HepG2 (cell line): ENCODE measurements at regions of chr5 and their contacts with region 1.

Region 1: GRCh38 chr5:180470966-180471582 is 23.1 kb upstream of the CNOT6 start:
- DNase-seq: peak; percentile 25
- ATAC-seq: peak; percentile 77
- H3K4me3 ChIP-seq: no peak overlapping the region
- H3K27ac ChIP-seq: no peak overlapping the region
- H3K4me1 ChIP-seq: peaks cover 13% of the 10 kb centered on the region
- H3K27me3 ChIP-seq: peaks cover 3 to 31% of the 10 kb centered on the region in 2 experiments; a peak in 3 of 5 replicates
- CTCF ChIP-seq: peak; percentile 85
- EP300 ChIP-seq: no peak
- POLR2A ChIP-seq: no peak
- RAD21 ChIP-seq: peak; percentile 62

Region 2: DNA sequence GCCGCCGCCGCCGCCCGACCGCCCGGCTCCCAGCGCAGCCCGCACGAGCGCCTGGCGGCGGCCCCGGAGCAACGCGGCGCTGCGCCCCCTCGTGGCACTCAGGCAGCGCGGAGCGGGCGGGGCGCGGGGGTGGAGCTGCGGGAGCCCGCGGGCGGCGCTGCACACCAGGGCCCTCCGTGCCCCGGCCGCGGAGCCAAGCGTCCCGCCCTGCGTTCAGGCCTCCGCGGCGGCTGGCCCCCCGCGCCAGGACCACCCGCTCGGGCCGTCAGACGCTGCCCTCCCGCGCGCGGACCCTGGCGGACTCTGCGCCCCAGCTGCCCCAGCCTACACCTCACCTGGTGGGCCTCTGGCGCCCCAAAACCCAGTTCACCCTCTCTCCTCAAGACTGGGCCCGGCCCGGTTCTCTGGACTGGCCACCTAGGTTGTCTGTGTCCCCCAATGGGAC is 261.9 kb before region 1 on chr5 and contains the start of gene RASGEF1C:
- CTCF ChIA-PET with region 1: no interaction called
- POLR2A ChIA-PET with region 1: no interaction called
- in situ Hi-C with region 1: loop called (anchors 25 kb)
- intact Hi-C with region 1: no loop called
- DNase-seq: peak; percentile 16
- ATAC-seq: peak; percentile 86
- H3K4me3 ChIP-seq: peak within 1 kb of the TSS; percentile 21 to 61 (median 50); a peak in 4 of 6 replicates
- H3K27ac ChIP-seq: no peak within 1 kb of the TSS
- H3K4me1 ChIP-seq: peaks cover 11% of the 10 kb centered on the region
- H3K27me3 ChIP-seq: peaks cover 0 to 22% of the 10 kb centered on the region in 2 experiments; a peak in 3 of 5 replicates
- CTCF ChIP-seq: peak; percentile 48; the same call in 1 of the 2 replicates
- EP300 ChIP-seq: no peak
- POLR2A ChIP-seq: no peak
- RAD21 ChIP-seq: peak; percentile 79
- total RNA-seq, gene RASGEF1C: not detected in 2 replicates

Region 3: DNA sequence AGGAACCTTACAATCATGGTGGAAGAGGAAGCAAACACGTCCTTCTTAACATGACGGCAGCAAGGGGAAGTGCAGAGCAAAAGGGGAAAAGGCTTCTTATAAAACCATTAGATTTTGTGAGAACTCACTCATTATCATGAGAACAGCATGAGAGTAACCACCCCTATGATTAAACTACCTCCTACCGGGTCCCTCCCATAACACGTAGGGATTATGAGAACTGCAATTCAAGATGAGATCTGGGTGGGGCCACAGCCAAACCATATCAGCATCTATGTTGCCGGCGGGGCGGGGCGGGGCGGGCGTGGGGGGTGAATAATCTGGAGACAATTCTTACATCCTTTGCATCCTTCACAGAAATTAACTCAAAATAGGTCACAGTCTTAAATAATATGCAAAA is 59.1 kb before region 1 on chr5:
- CTCF ChIA-PET with region 1: interaction called, 6 read pairs
- POLR2A ChIA-PET with region 1: no interaction called
- in situ Hi-C with region 1: no loop called
- intact Hi-C with region 1: loop called (anchors 5 kb)
- DNase-seq: no peak
- ATAC-seq: no peak
- H3K4me3 ChIP-seq: no peak overlapping the region
- H3K27ac ChIP-seq: no peak overlapping the region
- H3K4me1 ChIP-seq: no peaks in the 10 kb centered on the region
- H3K27me3 ChIP-seq: no peaks in the 10 kb centered on the region; a peak in 1 of 5 replicates
- CTCF ChIP-seq: no peak
- EP300 ChIP-seq: no peak
- POLR2A ChIP-seq: no peak
- RAD21 ChIP-seq: no peak